Panc1 (cell line): ENCODE measurements at regions of chr19 and their contacts with region 1.

Region 1: GRCh38 chr19:53424968-53425597 is 6.7 kb upstream of the ZNF761 start:
- DNase-seq: peak; percentile 58
- ATAC-seq: peak; percentile 92
- H3K4me3 ChIP-seq: no peak overlapping the region
- H3K27ac ChIP-seq: no peak overlapping the region
- H3K4me1 ChIP-seq: no peaks in the 10 kb centered on the region
- H3K27me3 ChIP-seq: no peaks in the 10 kb centered on the region
- CTCF ChIP-seq: peak; percentile 93

Region 2: DNA sequence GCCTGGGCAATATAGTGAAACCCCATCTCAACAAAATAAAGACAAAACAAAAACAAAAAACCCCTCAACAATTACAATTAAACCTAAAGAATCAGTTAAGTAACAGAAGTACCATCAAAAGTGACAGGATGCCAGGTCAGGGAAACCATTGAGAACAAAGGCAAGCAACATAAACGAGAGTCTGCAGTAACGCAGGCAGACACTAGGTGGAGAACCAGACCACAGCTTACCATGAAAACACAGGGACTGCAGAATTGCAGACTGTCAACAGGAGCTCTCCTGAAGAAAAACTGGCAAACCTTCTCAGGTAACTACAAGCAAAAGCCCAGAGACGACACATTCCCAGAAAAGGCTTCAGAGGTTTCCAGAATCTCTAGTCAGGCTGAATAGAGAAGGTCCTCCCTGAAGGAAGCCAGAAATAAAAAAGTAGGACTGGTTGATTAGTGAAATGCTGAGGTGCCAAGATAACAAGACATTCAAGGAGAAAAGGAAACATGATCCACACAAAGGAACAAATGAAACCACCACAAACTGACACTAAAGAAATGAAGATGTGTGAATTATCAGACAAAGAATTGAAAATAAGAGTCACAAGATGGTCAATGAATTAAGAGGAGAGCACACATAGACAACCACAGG is 229.7 kb before region 1 on chr19:
- CTCF ChIA-PET with region 1: no interaction called
- POLR2A ChIA-PET with region 1: no interaction called
- in situ Hi-C with region 1: no loop called
- intact Hi-C with region 1: no loop called
- DNase-seq: peak; percentile 88
- ATAC-seq: peak; percentile 58
- H3K4me3 ChIP-seq: no peak overlapping the region
- H3K27ac ChIP-seq: no peak overlapping the region
- H3K4me1 ChIP-seq: peaks cover 7% of the 10 kb centered on the region
- H3K27me3 ChIP-seq: no peaks in the 10 kb centered on the region
- CTCF ChIP-seq: peak; percentile 99

Region 3: DNA sequence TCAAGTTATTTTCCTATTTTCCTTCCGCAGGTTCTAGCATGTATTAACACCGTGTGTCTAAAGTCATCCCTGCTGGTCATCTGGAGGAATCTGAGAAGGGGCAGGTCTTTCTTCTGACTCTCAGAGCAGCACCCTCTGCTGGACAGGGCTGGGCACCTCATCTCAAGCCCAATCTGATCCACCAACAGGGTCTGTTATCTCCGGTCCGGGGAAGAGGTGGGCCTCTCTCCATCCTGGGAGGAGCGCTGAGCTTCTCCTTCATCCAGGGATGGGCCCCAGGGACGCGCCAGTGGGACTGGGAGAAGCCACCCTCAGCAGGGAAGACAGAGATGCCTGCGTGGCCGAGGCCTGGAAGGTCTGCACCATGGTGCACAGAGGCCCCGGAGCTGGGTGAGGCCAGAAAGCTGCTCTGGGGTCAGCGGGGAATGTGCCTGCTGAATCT is 86.9 kb after region 1 on chr19:
- CTCF ChIA-PET with region 1: interaction called, 4 read pairs
- POLR2A ChIA-PET with region 1: no interaction called
- in situ Hi-C with region 1: no loop called
- intact Hi-C with region 1: loop called (anchors 5 kb)
- DNase-seq: peak; percentile 20
- ATAC-seq: peak; percentile 97
- H3K4me3 ChIP-seq: no peak overlapping the region
- H3K27ac ChIP-seq: no peak overlapping the region
- H3K4me1 ChIP-seq: peaks cover 3% of the 10 kb centered on the region; the same call in 1 of the 2 replicates
- H3K27me3 ChIP-seq: no peaks in the 10 kb centered on the region
- CTCF ChIP-seq: peak; percentile 95